WTC11 (cell line): ENCODE measurements at regions of chr19 and their contacts with region 1.

Region 1: DNA sequence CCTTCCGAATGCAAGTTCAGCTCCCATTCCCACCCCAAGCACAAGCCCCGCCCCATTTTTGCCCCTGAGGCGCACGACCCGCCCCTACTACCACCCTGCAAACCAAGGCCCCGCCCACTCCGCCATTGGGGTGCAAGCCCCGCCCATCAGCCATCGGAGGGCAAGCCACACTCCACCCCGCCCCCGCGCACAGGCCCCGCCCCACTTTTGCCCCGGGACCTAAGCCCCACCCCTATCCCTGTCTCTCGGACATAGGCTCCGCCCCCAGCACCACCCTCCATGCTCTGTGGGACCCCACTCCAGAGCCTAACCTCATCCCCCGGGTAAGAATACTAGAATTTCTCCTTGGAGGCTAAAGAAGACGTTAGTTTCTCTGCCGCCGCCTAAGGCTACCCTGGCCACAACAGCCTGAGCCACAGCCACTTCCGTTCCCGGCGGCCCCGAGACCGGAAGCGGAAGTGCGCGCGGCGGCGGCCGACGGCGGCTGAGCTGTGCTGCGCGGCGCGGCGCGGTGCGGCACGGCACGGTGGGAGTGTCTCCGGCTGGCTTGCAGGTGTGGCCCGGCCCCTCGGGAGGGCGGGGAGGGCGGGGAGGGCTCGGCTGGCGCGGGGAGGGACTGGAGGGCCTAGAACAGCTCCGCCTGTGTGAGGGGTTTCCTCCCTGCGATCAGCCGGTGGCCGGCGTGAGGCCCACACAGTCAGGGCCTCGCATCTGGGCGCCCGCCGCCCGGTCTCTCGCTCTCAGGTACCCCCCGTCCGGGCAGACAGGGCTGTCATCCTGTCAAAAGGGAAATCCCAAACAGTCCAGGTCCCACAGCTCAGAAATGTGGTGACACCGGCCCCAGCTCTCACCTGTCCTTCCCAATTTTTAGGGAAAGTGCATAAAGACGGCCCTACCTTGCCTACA is at the start of gene ZNF333:
- DNase-seq: peak; percentile 100
- ATAC-seq: peak; percentile 92
- H3K4me3 Mint-ChIP-seq: peak within 1 kb of the TSS; percentile 84
- H3K27ac Mint-ChIP-seq: peak within 1 kb of the TSS; percentile 98
- H3K4me1 Mint-ChIP-seq: peaks cover 11% of the 10 kb centered on the region
- H3K27me3 Mint-ChIP-seq: peaks cover 4% of the 10 kb centered on the region; the same call in 1 of the 2 replicates
- CTCF ChIP-seq: no peak
- total RNA-seq, gene ZNF333: 13.5 to 16.2 TPM (median 14.8 TPM) in 3 replicates

Region 2: GRCh38 chr19:14571695-14572490 is 118.0 kb before region 1 on chr19 and contains the start of gene NDUFB7:
- CTCF ChIA-PET with region 1: interaction called, 224 read pairs
- POLR2A ChIA-PET with region 1: interaction called, 3 read pairs
- DNase-seq: peak; percentile 90
- ATAC-seq: peak; percentile 92
- H3K4me3 Mint-ChIP-seq: peak within 1 kb of the TSS; percentile 97
- H3K27ac Mint-ChIP-seq: peak within 1 kb of the TSS; percentile 95
- H3K4me1 Mint-ChIP-seq: peaks cover 7% of the 10 kb centered on the region
- H3K27me3 Mint-ChIP-seq: no peaks in the 10 kb centered on the region
- CTCF ChIP-seq: 0 out of 2 replicates have a peak, but pooled peaks have one; percentile 18
- total RNA-seq, gene NDUFB7: 240 to 255 TPM (median 254 TPM) in 3 replicates

Region 3: GRCh38 chr19:14648506-14648905 is 41.3 kb before region 1 on chr19:
- CTCF ChIA-PET with region 1: no interaction called
- POLR2A ChIA-PET with region 1: no interaction called
- DNase-seq: no peak
- ATAC-seq: no peak
- H3K4me3 Mint-ChIP-seq: no peak overlapping the region
- H3K27ac Mint-ChIP-seq: no peak overlapping the region
- H3K4me1 Mint-ChIP-seq: no peaks in the 10 kb centered on the region
- H3K27me3 Mint-ChIP-seq: peaks cover 44% of the 10 kb centered on the region
- CTCF ChIP-seq: no peak